ENCODE measurements at regions of chr12 and their contacts with region 1.

Region 1: DNA sequence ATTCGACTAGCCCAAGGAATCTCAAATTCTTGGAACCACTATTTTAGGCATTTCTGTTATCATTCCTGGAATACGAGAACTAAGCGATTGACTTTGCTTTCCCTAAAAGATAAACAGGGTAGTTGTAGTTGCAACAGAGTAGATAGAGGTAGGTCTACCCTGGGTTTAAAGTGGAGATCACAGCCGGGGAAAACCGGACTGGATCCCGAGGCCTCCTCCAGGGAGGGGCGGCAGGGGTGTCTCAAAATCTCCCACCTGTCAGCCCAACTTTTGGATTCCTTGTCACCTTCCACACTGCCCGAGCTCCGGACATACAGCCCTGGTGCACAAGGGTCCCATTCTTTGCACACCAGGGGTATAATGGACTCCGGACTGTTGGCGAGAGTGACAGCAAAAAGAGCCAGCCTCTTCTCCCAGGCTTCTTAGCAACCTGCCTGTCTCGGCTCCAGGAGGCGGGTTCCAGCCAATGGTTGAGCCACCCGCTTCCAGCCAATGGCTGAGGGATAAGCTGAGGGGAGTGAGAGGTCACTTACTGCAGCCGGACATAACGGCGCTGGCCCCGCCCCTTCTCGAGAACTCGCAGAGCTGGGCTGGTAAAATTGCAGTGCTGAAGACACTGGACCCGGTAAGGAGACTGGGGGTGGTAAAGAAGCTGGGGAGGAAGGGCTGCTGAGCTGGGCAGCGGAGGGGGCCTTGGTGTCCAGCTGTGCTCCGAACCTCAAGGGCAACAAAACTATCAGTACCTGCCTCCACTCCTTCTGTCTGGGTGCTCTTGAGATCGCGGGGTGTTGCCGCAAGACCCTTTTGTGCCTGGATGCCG is at the start of gene SUOX:
- DNase-seq: peak in 1 of 2 donors; percentile 99
- H3K4me3 ChIP-seq: peak within 1 kb of the TSS; percentile 65 to 68
- H3K27ac ChIP-seq: peak within 1 kb of the TSS; percentile 76
- H3K4me1 ChIP-seq: peaks cover 16% of the 10 kb centered on the region
- H3K27me3 ChIP-seq: no peaks in the 10 kb centered on the region
- CTCF ChIP-seq: no peak
- POLR2A ChIP-seq: no peak
- total RNA-seq, gene SUOX: 15.5 TPM

Region 2: GRCh38 chr12:56041552-56042429 is 44.9 kb after region 1 on chr12 and contains the start of gene RPS26:
- intact Hi-C with region 1: loop called (anchors 2 kb)
- DNase-seq: peak in 1 of 2 donors; percentile 97
- H3K4me3 ChIP-seq: peak within 1 kb of the TSS; percentile 64 to 76
- H3K27ac ChIP-seq: peak within 1 kb of the TSS; percentile 71
- H3K4me1 ChIP-seq: peaks cover 21% of the 10 kb centered on the region
- H3K27me3 ChIP-seq: no peaks in the 10 kb centered on the region
- CTCF ChIP-seq: peak in 1 of 3 experiments; percentile 30
- POLR2A ChIP-seq: peak in 1 of 2 donors; percentile 43
- total RNA-seq, gene RPS26: 597 TPM